ENCODE measurements at regions of chr15 and their contacts with region 1.

Region 1: DNA sequence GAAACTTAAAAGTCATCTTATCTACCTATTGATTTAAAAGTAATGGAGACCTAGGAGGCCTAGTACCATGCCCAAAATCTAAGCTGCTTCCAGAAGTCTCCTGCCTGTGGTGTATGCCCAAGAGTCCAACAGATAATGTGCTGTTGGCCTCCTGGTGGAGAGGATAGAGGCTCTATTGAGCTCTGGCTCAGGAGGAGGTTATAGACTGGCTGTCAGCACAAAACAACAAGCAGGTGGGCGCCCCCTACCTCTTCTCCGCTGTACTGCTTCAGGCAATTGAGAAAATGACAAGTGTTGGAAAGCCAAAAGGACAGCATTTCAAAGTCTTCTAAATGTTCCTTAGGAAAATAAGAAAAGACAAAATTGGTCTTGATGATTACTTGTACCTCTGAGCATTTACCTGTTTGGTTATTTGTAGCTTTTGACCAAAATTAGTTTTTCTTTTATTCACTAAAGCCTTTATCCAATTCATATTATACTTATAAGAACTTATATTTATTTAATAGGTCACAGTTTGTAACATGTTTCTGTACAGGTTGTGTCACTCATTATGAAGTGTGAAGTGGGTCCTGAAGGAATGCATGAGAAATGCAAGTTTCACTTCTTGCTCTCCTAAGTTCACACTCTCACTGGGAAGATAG is 17.2 kb upstream of the GNB5 start:
- DNase-seq: peak; percentile 43 to 95
- H3K4me3 ChIP-seq: no peak overlapping the region
- H3K27ac ChIP-seq: no peak overlapping the region
- H3K4me1 ChIP-seq: no peaks in the 10 kb centered on the region
- H3K27me3 ChIP-seq: no peaks in the 10 kb centered on the region
- CTCF ChIP-seq: peak; percentile 66 to 98 (median 92)
- EP300 ChIP-seq: no peak
- POLR2A ChIP-seq: no peak
- RAD21 ChIP-seq: peak; percentile 66 to 77

Region 2: DNA sequence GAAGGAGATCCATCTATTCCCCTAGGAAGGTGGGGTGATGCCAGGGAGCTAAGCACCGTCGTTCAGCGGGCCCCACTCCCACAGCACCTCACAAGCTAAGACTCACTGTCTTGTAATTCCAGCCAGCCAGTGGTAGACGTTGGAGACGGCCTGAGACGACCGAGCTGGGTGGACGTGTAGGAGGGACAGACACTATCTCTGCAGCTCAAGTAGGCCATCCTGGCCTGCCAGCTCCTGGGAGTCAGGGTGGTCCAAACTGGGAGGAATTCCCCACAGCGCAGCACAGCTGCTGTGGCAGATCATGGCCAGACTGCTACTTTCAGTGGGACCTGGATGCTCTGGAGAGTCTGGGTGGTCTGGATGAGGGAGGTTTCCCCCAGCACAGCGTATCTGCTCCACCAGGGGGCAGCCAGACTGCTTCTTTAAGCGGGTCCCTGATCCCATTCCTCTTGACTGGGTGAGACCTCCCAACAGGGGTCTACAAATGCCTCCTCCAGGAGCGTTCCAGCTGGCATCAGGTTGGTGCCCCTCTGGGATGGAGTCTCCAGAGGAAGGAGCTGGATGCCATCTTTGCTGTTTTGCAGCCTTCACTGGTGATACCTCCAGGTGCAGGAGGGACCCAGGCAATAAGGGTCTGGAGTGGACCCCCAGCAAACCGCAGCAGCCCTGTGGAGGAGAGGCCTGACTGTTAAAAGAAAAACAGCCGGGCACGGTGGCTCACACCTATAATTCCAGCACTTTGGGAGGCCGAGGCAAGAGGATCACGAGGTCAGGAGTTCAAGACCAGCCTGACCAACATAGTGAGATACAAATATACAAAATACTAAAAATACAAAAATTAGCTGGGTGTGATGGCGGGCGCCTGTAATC is 44.9 kb before region 1 on chr15:
- CTCF ChIA-PET with region 1: interaction called, 56 read pairs
- POLR2A ChIA-PET with region 1: interaction called, 3 read pairs
- DNase-seq: peak in 1 of 2 experiments; percentile 79
- H3K4me3 ChIP-seq: no peak overlapping the region
- H3K27ac ChIP-seq: peak overlapping the region; percentile 29
- H3K4me1 ChIP-seq: no peaks in the 10 kb centered on the region; a peak in 2 of 7 replicates
- H3K27me3 ChIP-seq: no peaks in the 10 kb centered on the region
- CTCF ChIP-seq: peak; percentile 69 to 77 (median 74)
- EP300 ChIP-seq: no peak
- POLR2A ChIP-seq: no peak
- RAD21 ChIP-seq: peak; percentile 57 to 67

Region 3: DNA sequence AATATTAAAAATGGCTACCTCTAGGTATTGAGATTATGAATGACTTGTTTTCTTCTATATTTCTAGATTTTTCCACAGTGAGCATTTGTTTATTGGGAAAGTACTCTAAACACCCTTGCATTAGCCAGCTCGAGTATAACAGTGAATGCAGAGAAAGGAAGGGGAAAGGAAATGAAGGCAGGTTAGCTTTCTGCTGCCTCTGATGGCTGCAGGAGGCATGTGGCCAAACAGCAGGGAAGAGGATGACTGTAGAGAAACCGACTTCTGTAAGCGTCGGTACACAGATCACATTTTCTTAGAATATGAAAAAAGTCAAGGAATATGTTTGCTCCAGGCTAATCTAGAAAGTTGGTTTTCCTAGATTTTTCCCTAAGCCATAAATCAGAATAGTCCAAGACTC is 37.0 kb before region 1 on chr15:
- CTCF ChIA-PET with region 1: interaction called, 56 read pairs
- POLR2A ChIA-PET with region 1: no interaction called
- DNase-seq: peak in 1 of 2 experiments; percentile 27
- H3K4me3 ChIP-seq: no peak overlapping the region
- H3K27ac ChIP-seq: no peak overlapping the region
- H3K4me1 ChIP-seq: peaks cover 0 to 4% (median 0%) of the 10 kb centered on the region in 4 experiments; a peak in 1 of 7 replicates
- H3K27me3 ChIP-seq: no peaks in the 10 kb centered on the region
- CTCF ChIP-seq: peak; percentile 5 to 38 (median 8); a peak in 3 of 4 replicates
- EP300 ChIP-seq: no peak
- POLR2A ChIP-seq: no peak
- RAD21 ChIP-seq: peak in 1 of 2 experiments; percentile 18; a peak in 1 of 4 replicates

Region 4: GRCh38 chr15:52179278-52180195 is 28.9 kb before region 1 on chr15:
- CTCF ChIA-PET with region 1: interaction called, 189 read pairs
- POLR2A ChIA-PET with region 1: interaction called, 3 read pairs
- DNase-seq: peak; percentile 56 to 92
- H3K4me3 ChIP-seq: peak overlapping the region; percentile 63 to 98 (median 81)
- H3K27ac ChIP-seq: peak overlapping the region; percentile 76; the same call in 1 of the 2 replicates
- H3K4me1 ChIP-seq: peaks cover 1 to 9% (median 3%) of the 10 kb centered on the region in 4 experiments; a peak in 4 of 7 replicates
- H3K27me3 ChIP-seq: peaks cover 0 to 8% (median 7%) of the 10 kb centered on the region in 4 experiments; a peak in 4 of 7 replicates
- CTCF ChIP-seq: no peak
- EP300 ChIP-seq: no peak; a peak in 1 of 3 replicates
- POLR2A ChIP-seq: peak; percentile 79 to 87
- RAD21 ChIP-seq: 0 out of 4 replicates have a peak, but pooled peaks of 1 of the 2 experiments have one; percentile 1

Region 5: DNA sequence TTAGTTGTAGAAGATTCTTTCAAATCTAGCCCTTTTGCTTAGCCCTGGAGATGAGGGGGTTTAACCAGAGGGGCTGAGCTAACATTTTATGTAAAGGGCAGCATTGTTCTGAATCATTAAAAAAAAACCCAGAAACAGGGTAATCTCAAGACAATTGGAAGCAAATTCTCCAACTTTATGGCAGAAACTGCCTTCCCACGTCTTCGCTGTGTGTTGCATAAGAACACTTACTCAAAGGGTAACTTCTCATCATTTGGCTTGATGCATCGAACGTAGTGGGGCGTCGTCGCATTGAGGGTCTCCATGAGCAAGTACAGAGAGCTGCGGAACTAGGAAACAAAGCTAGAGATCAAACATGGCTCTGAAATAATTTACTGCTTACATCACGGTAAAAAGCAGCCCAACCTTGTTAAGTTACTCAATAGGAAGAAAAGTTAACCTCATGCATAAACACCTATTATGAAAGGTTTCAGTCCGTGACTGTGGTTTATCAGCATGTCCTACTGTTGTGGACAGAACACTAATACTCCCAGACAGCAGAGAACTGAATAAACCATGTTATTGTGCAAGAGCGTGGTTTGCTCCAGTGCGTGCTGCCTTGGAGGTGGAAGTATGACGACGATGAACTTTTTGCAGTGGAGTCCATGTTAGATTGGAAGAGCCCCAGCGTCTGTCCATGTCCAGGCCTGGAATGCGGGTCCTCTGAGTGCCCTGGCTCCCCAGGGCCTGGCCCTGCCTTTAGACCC is 38.4 kb after region 1 on chr15:
- CTCF ChIA-PET with region 1: interaction called, 10 read pairs
- POLR2A ChIA-PET with region 1: no interaction called
- DNase-seq: no peak
- H3K4me3 ChIP-seq: no peak overlapping the region
- H3K27ac ChIP-seq: no peak overlapping the region
- H3K4me1 ChIP-seq: no peaks in the 10 kb centered on the region
- H3K27me3 ChIP-seq: no peaks in the 10 kb centered on the region
- CTCF ChIP-seq: no peak
- EP300 ChIP-seq: no peak
- POLR2A ChIP-seq: no peak
- RAD21 ChIP-seq: no peak

Measured in H1 (cell line).